ENCODE measurements at regions of chr16 and their contacts with region 1.

Region 1: DNA sequence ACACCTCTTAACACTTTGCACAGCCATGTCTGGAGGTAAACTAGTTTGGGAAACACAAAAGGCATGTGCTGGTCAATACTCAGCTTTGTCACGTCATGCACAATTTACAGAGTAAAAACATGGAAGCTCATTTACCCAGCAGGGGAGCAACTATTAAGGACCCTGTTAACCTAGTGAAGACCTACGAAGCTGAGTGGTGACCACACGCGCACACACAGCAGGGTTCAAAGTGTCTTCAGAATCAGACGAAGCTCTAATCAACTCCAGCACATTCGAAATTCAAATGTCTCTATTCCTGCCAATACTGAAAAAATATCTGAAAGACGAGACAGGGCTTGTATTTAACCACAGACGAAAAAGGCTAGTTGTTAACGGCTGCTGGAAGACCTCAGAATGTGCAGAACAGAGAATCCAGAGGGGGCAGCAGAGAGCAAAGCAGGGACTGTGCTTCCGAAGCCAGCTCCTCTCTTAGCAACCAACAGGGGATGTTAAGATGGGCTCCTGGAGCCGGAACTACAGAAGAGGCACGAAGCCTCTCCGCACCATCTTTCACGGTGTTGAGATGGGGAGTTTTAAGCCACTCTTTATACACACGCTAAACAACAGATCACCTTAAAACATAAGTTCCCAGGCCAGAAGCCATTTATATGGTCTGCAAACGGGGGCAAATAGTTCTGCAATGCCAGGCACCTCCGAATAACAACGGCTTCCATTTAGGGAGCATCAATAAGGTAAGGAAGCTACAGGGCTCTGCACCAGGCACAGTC is 45.7 kb downstream of the CMTM4 start:
- DNase-seq: peak; percentile 88 to 94 (median 93)
- H3K4me3 ChIP-seq: peak overlapping the region in 4 of 7 experiments; percentile 29 to 73 (median 56)
- H3K27ac ChIP-seq: no peak overlapping the region
- H3K4me1 ChIP-seq: peaks cover 4 to 15% (median 9%) of the 10 kb centered on the region in 4 experiments
- H3K27me3 ChIP-seq: no peaks in the 10 kb centered on the region

Region 2: GRCh38 chr16:66552286-66553177 is 98.4 kb before region 1 on chr16 and contains the start of gene CKLF:
- CTCF ChIA-PET with region 1: no interaction called
- POLR2A ChIA-PET with region 1: no interaction called
- DNase-seq: peak; percentile 87 to 94 (median 93)
- H3K4me3 ChIP-seq: peak within 1 kb of the TSS; percentile 35 to 85 (median 71)
- H3K27ac ChIP-seq: peak within 1 kb of the TSS; percentile 36 to 88
- H3K4me1 ChIP-seq: peaks cover 26 to 72% (median 61%) of the 10 kb centered on the region in 4 experiments
- H3K27me3 ChIP-seq: no peaks in the 10 kb centered on the region

Region 3: GRCh38 chr16:66639091-66639885 is 11.6 kb before region 1 on chr16:
- CTCF ChIA-PET with region 1: interaction called, 32 read pairs
- POLR2A ChIA-PET with region 1: no interaction called
- DNase-seq: no peak
- H3K4me3 ChIP-seq: no peak overlapping the region
- H3K27ac ChIP-seq: no peak overlapping the region
- H3K4me1 ChIP-seq: no peaks in the 10 kb centered on the region
- H3K27me3 ChIP-seq: no peaks in the 10 kb centered on the region

Region 4: DNA sequence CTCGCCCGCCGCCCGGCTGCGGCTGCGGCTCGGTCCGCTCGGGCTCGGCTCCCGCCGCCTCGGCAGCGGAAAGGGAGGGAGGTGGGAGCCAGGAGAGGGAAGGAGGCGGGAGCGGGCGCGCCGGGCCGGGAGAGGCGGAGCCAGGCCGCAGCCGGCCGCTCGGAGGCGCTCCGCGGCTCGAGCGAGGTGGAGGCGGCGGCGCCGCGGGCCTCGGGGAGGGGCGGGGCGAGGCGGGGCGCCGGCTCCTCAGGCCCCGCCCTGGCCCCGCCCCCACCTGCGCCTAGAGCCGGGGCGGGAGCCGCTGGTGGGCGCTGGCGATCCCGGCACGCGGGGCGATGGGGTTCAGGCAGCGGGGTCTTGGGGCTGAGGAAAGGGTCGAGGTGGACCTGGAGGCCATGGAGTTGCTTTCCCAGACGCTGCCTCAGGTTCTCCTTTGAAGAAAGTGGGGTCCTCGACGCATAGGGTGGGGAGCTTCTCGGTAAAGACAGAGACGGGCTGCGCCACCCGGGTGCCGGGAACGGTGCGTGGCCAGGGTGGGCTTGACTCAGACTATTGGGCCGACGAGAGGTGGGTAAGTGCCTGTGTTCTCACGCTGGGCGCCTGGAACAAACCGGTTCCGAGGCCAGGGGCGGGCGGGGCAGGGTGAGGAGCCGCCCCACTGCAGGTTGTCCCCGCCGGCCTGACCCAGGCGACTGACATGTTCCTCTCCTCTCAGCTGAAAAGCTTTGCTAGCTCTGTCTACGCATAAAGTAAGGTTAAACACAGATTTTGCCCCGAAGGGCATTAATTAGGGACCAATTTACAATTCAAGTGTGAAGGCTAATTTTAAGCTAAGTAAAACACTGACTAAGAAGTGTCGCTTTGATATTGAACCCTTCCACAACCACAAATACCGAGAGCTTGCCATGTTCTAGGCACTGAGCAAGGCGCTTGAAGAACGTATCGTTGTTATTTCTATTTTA is 46.1 kb after region 1 on chr16 and contains the start of gene CMTM4:
- CTCF ChIA-PET with region 1: interaction called, 13 read pairs
- POLR2A ChIA-PET with region 1: interaction called, 12 read pairs
- DNase-seq: peak; percentile 67 to 75 (median 73)
- H3K4me3 ChIP-seq: peak within 1 kb of the TSS; percentile 60 to 89 (median 70)
- H3K27ac ChIP-seq: no peak within 1 kb of the TSS
- H3K4me1 ChIP-seq: peaks cover 9 to 31% (median 28%) of the 10 kb centered on the region in 4 experiments
- H3K27me3 ChIP-seq: no peaks in the 10 kb centered on the region

Measured in common myeloid progenitor, CD34-positive (primary cell).